ENCODE measurements at regions of chr7 and their contacts with region 1.

Region 1: DNA sequence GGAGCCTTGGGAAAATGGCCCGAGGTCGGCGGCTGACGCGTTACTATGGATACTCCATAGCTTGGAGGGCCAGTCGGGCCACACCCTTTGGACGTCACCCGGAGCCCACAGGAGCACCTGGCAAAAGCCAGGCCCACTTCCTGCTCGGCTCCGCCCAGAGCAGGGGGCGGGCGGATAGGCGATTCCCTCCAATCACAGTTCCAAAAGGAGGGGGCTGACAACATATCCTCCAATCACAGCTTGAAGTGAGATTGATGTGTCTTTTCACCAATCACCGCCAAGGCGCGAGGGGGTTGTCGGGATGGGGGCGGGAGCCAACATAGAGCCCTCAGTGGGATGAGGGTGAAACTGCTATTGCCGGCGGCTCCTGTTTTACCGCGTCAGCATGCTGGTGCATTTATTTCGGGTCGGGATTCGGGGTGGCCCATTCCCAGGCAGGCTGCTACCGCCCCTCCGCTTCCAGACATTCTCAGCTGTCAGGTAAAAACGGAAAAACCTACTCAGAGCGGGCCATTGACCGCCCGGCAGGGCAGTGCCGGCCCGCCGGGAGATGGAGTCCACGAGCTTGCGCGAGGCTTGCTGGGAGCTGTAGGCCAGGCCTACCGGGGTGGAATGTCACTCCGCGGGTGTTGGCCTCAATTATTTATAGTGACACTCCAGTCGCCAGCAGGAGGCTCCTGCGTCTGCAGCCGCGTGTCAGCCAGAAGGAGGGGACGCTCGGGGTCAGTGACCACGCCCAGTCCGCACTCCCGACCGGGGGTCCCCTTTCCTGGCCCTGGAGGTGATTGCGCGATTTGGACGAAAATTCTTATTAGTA is at the start of gene ABCB8:
- DNase-seq: peak; percentile 97 to 99 (median 98)
- ATAC-seq: peak; percentile 97 to 98
- H3K4me3 ChIP-seq: peak within 1 kb of the TSS; percentile 80
- H3K27ac ChIP-seq: peak within 1 kb of the TSS; percentile 80
- H3K4me1 ChIP-seq: no peaks in the 10 kb centered on the region
- H3K27me3 ChIP-seq: no peaks in the 10 kb centered on the region
- total RNA-seq, gene ABCB8: 20.9 to 24.5 (median 23.4) TPM

Region 2: GRCh38 chr7:151080522-151081169 is 52.3 kb after region 1 on chr7 and contains the start of gene FASTK:
- intact Hi-C with region 1: loop called in 1 of 4 experiments (anchors 10 kb)
- DNase-seq: peak; percentile 91 to 97 (median 96)
- ATAC-seq: peak; percentile 81 to 87
- H3K4me3 ChIP-seq: peak within 1 kb of the TSS; percentile 84
- H3K27ac ChIP-seq: peak within 1 kb of the TSS; percentile 92
- H3K4me1 ChIP-seq: peaks cover 5% of the 10 kb centered on the region
- H3K27me3 ChIP-seq: no peaks in the 10 kb centered on the region
- total RNA-seq, gene FASTK: 64.1 to 82.0 (median 68.9) TPM

Region 3: GRCh38 chr7:151110941-151111645 is 82.8 kb after region 1 on chr7:
- intact Hi-C with region 1: loop called in 1 of 4 experiments (anchors 10 kb)
- DNase-seq: peak; percentile 82 to 92 (median 90)
- ATAC-seq: peak; percentile 83
- H3K4me3 ChIP-seq: no peak overlapping the region
- H3K27ac ChIP-seq: no peak overlapping the region
- H3K4me1 ChIP-seq: peaks cover 3% of the 10 kb centered on the region
- H3K27me3 ChIP-seq: no peaks in the 10 kb centered on the region

Measured in right cardiac atrium (tissue), 5 donors.